Activated T-helper 2 cell treated with anti-CD3 and anti-CD28 coated beads, Interferon-gamma antibody, Interleukin-2, Interleukin-4, amounts not matched to agents 10 μg/mL and 5 μg/mL and 100 μg/mL, durations not matched to agents 14 hours and 24 hours and 36 hours (primary cell): ENCODE measurements at regions of chr1 and their contacts with region 1.

Region 1: GRCh38 chr1:91754348-91754747 is 131.6 kb downstream of the TGFBR3 start:
- DNase-seq: peak; percentile 13
- H3K4me3 Mint-ChIP-seq: peak overlapping the region; percentile 28
- H3K27ac Mint-ChIP-seq: peak overlapping the region; percentile 88
- H3K4me1 Mint-ChIP-seq: peaks cover 55% of the 10 kb centered on the region
- H3K27me3 Mint-ChIP-seq: no peaks in the 10 kb centered on the region

Region 2: GRCh38 chr1:91500756-91501522 is 253.4 kb before region 1 on chr1 and contains the start of gene CDC7:
- intact Hi-C with region 1: loop called (anchors 1 kb)
- DNase-seq: peak; percentile 84
- H3K4me3 Mint-ChIP-seq: no peak within 1 kb of the TSS
- H3K27ac Mint-ChIP-seq: no peak within 1 kb of the TSS
- H3K4me1 Mint-ChIP-seq: peaks cover 29% of the 10 kb centered on the region
- H3K27me3 Mint-ChIP-seq: no peaks in the 10 kb centered on the region
- total RNA-seq, gene CDC7: 27.4 and 28.8 TPM in 2 replicates

Region 3: GRCh38 chr1:91555821-91556531 is 198.4 kb before region 1 on chr1:
- intact Hi-C with region 1: loop called (anchors 1 kb)
- DNase-seq: peak; percentile 77
- H3K4me3 Mint-ChIP-seq: peak overlapping the region; percentile 53
- H3K27ac Mint-ChIP-seq: peak overlapping the region; percentile 93
- H3K4me1 Mint-ChIP-seq: peaks cover 86% of the 10 kb centered on the region
- H3K27me3 Mint-ChIP-seq: no peaks in the 10 kb centered on the region

Region 4: GRCh38 chr1:91673613-91674012 is 80.7 kb before region 1 on chr1:
- intact Hi-C with region 1: loop called (anchors 1 kb)
- DNase-seq: no peak
- H3K4me3 Mint-ChIP-seq: no peak overlapping the region
- H3K27ac Mint-ChIP-seq: peak overlapping the region; percentile 71
- H3K4me1 Mint-ChIP-seq: peaks cover 33% of the 10 kb centered on the region
- H3K27me3 Mint-ChIP-seq: no peaks in the 10 kb centered on the region

Region 5: GRCh38 chr1:91712981-91713841 is 41.1 kb before region 1 on chr1:
- intact Hi-C with region 1: loop called (anchors 1 kb)
- DNase-seq: peak; percentile 26
- H3K4me3 Mint-ChIP-seq: peak overlapping the region; percentile 60
- H3K27ac Mint-ChIP-seq: peak overlapping the region; percentile 89
- H3K4me1 Mint-ChIP-seq: peaks cover 64% of the 10 kb centered on the region
- H3K27me3 Mint-ChIP-seq: no peaks in the 10 kb centered on the region

Region 6: GRCh38 chr1:91803847-91804545 is 49.6 kb after region 1 on chr1:
- intact Hi-C with region 1: loop called (anchors 1 kb)
- DNase-seq: peak; percentile 66
- H3K4me3 Mint-ChIP-seq: peak overlapping the region; percentile 74
- H3K27ac Mint-ChIP-seq: peak overlapping the region; percentile 93
- H3K4me1 Mint-ChIP-seq: peaks cover 52% of the 10 kb centered on the region
- H3K27me3 Mint-ChIP-seq: peaks cover 8% of the 10 kb centered on the region

Region 7: DNA sequence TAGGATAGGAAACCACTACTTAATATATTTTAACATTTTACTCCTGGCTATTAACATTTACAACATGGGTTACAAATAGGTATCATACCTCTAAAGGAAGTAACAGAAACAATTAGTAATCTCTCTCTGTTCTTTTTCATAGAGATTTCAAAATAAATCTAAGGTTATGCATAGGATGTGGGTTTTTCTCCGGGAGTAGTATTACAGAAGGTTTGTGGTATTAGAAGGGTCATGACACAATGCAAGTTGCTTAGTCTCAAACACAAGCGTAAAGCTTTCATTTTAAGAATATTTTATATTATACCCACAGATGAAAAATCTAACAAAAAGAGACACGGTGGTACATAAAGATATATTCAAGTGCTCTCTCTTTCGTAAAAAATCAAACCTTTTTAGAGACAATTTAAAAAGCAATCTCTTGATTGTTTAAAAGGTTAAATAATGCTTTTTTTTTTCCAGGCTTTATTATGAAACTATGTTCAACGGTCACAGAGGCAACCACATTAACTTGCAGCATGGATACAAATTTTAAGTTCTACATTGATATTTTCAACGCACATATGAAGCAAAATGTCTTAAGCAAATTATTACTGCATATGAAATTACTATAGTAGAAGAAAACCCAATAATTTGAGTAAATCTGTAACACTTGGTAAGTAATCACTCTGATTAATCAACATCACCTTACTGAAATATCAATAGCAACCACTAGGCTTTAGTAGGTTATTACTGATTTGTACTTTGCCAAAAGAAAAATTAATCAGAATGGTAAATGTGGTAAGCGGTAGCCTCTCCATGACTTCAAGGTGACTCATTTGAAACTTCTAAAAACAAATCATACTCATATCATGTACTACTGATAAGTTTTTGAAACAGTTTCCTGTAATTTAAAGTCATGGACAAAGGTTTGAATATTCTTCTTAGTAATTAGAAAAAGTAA is 829.7 kb after region 1 on chr1:
- intact Hi-C with region 1: loop called (anchors 10 kb)
- DNase-seq: no peak
- H3K4me3 Mint-ChIP-seq: peak overlapping the region; percentile 55
- H3K27ac Mint-ChIP-seq: peak overlapping the region; percentile 88
- H3K4me1 Mint-ChIP-seq: peaks cover 60% of the 10 kb centered on the region
- H3K27me3 Mint-ChIP-seq: no peaks in the 10 kb centered on the region